Activated CD8-positive, alpha-beta T cell treated with anti-CD3 and anti-CD28 coated beads, Interleukin-2, amount 10 ng/mL, durations not matched to agents 7 days and 5 days (primary cell): ENCODE measurements at regions of chr19 and their contacts with region 1.

Region 1: DNA sequence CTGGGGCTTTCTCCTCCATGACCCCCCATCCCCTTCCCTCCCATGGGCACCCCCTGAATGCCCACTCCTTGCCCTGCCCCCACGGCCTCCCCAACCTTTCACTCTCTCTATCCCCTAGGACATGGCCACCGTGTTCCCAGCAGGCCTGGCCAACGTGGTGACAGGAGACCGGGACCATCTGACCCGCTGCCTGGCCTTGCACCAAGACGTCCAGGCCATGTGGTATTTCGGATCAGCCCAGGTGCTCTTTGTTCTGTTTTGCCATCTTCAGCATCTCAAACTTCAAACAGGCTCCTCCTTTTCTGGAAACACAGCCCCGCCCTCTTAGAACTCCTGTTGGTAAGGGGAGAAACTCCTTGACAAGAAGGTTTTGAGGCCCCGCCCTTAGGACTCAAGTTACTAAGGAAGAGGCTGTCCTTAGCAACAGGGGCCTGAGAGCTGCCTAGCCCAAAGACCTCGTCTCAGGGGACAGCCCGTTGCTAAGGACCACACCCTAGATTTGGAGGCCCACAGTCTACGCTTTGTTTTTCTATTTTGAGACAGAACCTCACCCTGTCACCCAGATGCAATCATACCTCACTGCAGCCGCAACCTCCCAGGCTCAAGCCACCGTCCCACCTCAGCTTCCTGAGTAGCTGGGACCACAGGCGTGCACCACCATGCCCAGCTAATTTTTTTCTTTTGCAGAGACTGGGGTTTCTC is 5.1 kb upstream of the FLT3LG start:
- DNase-seq: peak; percentile 96
- ATAC-seq: peak; percentile 80
- H3K4me3 Mint-ChIP-seq: peak overlapping the region; percentile 70
- H3K27ac Mint-ChIP-seq: peak overlapping the region; percentile 99
- H3K4me1 Mint-ChIP-seq: peaks cover 56% of the 10 kb centered on the region
- H3K27me3 Mint-ChIP-seq: no peaks in the 10 kb centered on the region

Region 2: DNA sequence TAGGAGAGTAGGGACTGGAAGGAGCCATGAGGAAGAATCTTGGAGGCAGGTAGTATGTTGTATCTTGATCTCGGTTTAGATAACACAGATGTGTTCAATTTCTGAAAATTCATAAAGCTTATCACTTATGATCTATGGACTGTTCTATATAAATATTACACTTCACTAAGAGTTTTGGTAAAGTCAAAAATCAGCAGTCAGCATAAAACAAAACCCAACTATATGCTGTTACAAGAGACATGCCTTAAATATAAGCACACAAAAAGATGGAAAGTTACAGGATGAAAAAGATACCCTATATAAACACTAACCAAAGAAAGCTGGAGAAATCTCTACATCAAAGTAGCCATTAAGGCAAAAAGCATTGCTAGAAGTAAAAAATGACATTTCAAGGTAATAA is 85.3 kb before region 1 on chr19:
- CTCF ChIA-PET with region 1: no interaction called
- POLR2A ChIA-PET with region 1: no interaction called
- DNase-seq: no peak
- ATAC-seq: no peak
- H3K4me3 Mint-ChIP-seq: no peak overlapping the region
- H3K27ac Mint-ChIP-seq: no peak overlapping the region
- H3K4me1 Mint-ChIP-seq: peaks cover 5% of the 10 kb centered on the region
- H3K27me3 Mint-ChIP-seq: peaks cover 5% of the 10 kb centered on the region

Region 3: GRCh38 chr19:49451430-49452181 is 17.3 kb before region 1 on chr19 and contains the start of gene PIH1D1:
- CTCF ChIA-PET with region 1: interaction called, 114 read pairs
- POLR2A ChIA-PET with region 1: interaction called, 62 read pairs
- DNase-seq: peak; percentile 99
- ATAC-seq: peak; percentile 67
- H3K4me3 Mint-ChIP-seq: peak within 1 kb of the TSS; percentile 93
- H3K27ac Mint-ChIP-seq: peak within 1 kb of the TSS; percentile 100
- H3K4me1 Mint-ChIP-seq: peaks cover 62% of the 10 kb centered on the region
- H3K27me3 Mint-ChIP-seq: no peaks in the 10 kb centered on the region
- total RNA-seq, gene PIH1D1: 128 to 129 TPM